Right ventricle myocardium inferior (tissue), 1 donor: ENCODE measurements at regions of chr1 and their contacts with region 1.

Region 1: DNA sequence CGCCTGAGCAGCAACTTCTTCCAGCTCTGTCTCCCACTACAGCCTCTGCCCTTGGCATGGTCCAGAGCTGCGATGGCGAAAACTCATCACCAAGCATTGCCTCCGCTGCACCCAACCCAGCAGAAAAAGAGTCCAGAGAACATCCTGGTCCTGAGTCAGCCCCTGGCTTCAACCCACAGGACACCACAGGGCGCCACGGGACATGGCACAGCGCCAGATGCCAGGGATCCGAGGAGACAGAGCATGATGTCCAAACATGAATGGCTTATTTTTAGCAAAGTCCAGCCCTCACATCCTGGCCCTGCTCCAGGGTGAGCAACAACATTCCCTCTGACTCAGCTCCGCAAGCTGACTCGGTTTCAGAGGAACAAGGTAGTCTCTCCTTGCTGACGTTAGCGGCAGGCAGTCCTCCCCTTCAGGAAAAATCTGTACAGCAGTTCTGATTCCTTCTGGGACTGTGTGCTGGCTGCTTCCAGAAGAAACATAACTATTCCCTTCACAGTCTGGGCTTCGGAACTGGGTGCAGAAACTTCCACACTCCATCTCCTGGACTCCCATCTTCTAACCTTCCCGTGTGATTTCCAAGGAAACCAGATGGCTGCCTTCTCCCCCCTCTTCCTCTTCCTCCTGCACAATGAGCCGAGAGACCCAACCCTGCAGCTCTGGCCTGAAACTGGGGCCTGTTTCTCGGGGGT is 131.3 kb downstream of the TOMM20 start:
- DNase-seq: peak; percentile 97
- ATAC-seq: peak; percentile 93

Region 2: DNA sequence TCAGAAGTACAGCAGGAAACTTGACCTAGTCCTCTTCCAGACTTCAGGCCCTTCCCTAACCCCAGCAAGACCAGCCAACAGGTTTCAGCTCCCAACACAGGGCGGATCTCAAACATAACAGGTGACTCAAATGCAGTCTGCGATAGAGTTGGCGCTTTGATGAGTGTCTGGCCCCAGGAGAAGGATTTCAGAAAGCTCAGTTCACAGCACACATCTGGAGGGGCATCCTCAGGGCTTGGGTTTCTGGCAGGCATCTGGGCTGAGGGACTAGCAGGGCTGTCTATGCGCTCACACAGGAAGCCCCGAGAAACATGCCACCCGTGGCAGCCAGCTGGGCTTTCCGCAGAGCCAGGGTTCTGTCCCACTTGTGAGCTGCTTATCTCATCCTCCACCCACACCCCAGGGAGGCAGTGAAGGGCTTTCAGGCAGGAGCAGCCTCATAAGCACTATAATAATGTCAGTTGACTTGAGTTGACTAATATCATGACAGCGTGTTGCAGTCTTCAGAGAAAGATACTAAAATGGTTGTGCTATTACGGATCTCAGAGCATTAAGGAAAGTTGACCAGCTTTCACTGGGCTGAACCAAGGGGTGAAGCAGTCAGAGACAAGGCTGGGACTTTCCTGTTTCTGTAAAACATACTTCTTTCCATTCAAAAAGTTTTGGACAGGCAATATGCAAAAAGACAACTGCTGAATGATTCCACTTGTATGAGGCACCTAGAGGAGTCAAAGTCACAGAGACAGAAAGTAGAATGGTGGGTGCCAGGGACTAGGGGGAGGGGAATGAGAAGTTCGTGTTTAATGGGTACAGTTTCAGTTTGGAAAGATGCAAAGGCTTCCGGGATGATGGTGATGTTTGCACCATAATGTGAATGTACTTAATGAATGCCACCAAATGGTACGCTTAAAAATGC is 154.4 kb before region 1 on chr1:
- intact Hi-C with region 1: no loop called
- DNase-seq: peak; percentile 76
- ATAC-seq: peak; percentile 89

Region 3: GRCh38 chr1:234875953-234876855 is 121.1 kb before region 1 on chr1:
- intact Hi-C with region 1: no loop called
- DNase-seq: no peak
- ATAC-seq: peak; percentile 69

Region 4: DNA sequence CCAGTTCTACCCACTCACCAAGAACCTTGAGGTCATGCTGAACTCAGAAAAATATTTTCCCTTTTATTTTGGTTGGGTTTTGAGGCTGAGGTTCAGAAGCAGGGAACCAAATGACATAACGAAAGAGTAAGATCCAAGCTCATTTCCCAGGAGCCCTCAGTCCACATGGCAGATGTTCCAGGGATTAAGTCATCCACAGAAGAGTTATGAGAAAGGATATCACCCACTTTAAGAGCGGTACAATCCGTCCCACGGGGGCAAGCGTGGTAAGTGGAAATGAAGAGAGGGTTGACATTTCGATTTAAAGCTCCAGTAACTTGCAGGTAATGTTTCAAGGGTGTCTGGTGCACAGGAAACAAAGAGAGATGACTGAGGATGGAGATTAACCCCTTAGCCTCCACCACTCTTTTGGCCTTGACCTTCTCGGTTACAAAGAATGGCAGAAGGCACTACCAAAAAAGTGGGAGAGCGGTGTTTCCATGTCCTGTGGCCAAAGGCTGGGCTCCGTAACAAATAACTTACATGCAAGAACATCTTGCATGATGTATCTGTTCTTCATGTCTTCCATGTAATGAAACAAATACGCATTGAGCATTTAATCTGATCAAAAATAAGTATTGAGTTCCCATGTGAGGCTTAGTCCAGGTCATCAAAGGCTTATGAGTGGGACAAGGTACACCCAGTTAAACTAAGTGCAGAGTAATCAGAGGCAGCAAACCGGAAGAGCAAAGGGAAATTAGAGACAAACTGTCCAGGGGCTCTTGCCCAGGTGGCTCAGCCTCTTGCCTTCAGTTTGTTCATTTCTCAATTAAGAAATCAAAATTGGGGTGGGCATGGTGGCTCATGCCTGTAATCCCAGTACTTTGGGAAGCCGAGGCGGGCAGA is 110.1 kb before region 1 on chr1:
- intact Hi-C with region 1: loop called (anchors 5 kb)
- DNase-seq: peak; percentile 82
- ATAC-seq: peak; percentile 76

Region 5: DNA sequence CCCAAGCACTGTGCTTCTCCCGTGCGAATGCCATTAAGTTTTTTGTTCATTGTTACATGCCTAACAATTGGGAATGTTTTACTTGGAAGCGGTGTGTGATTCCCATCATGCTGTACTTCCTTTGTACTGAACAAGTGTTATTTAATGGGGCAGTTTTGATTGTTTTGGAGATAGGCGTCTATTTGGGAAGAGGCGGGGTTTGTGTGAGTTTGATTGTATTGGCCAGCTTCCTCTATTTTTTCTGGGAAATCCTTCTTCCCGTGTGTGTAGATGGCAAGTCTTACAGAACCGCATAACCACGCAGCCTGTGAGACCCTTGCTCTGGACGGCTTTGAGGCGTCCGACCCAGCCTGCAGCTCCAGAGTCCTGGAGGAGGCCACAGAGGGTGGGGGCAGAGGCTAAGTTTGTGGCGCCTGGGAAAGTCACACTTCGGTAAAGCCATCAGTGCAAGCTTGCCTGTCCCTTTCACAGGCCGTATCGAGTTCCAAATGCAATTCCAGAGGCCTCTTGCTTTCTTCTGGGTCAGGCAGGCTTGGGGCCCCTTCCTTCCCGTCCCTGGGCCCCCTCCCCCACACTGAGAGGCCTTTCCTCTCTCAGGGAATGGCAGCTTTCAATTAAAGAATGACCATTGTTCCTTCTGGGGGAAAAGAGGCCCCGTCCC is 79.0 kb before region 1 on chr1:
- intact Hi-C with region 1: loop called (anchors 5 kb)
- DNase-seq: no peak
- ATAC-seq: peak; percentile 14

Region 6: DNA sequence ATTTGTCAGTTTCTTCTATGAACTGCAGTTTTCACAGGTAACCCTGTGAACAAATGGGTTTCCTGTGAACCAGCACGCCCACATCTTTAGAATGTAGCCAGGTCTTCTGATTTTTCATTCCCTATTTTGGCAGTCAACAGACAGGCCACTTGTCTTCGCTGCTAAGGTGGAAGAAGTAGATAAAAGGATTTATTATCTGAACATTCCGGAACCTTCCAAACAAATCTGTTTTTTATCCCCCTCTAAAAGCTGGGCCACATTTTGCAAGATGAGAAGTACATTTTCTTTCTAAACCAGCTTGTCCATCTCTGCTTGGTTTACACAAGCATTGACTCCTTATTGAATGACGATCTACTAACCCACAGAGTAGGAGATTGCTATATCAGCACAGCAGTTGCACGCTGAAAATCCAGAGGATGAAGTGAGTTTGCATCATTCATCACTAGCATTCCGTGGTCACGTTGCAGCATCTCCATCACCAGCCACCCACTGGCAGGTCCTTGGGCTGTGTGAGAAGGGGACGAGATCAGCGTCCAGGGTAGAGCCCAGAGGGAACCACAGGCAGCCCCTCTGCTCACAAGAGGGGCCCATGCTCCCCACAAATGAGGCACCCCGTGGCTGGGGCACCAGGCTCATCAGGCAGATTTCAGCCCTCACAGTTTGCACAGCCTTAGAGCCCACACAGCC is 47.8 kb after region 1 on chr1:
- intact Hi-C with region 1: loop called (anchors 5 kb)
- DNase-seq: no peak
- ATAC-seq: no peak

Region 7: GRCh38 chr1:235075188-235075926 is 78.0 kb after region 1 on chr1:
- intact Hi-C with region 1: loop called (anchors 1 kb)
- DNase-seq: peak; percentile 82
- ATAC-seq: peak; percentile 70

Region 8: DNA sequence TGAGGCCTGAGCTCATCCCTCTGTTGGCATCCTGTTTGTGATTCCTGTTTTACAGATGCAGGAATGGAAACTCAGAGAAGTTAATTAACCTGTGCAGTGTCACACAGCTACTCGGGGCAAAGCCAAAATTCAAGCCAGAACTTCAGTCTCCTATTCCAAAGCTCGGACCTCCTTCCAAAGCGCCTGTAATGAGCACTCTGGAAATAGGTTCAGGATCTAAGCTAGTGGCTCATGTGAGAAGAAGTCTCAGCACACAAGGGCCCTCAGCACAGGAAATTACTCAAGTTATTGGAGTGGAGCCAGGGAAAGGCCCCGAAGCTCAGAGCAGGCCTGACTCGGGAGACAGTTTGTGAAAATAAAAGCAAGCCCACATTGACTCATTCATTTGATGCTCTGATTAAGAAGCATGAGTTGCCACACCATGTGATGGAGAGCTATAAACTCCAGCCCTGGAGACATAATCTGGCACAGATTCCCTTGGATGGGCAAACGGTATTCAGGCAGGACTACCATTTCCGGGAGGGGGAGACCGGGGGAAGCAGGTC is 920.0 kb after region 1 on chr1:
- intact Hi-C with region 1: no loop called
- DNase-seq: peak; percentile 69
- ATAC-seq: peak; percentile 92